Sigmoid colon (tissue), 7 donors: ENCODE measurements at regions of chr9 and their contacts with region 1.

Region 1: DNA sequence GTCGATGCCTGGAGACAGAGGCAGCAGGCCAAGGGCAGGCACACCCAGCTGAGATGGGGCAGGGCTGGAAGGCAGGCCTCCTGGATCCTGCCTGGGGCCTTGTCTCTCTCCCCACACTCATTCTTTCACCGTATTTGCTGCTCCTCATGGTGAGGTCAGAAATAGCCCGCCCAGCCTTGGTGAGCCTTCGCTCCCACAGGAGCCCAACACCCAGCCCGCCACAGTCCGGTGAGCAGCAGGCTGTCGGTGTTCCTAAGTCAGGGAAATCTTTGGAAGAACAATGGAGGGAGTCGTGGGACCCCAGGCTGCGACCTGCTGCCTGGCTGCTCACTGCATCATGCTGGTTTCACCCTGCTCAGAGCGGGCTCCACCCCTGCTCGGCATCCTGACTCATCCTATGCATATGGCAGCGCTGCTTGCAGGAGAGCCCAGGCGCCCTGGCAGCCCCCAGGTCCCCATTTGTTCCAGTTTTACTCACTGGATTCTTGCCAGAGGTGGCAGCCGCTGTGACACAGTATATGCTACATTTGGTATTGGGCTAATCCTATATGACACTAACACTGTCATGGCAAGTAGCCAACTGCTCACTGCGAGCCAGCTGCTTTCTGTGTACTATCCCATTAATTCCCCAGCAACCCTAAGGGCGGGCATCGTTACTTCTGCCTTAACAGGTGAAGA is 53.2 kb upstream of the NCS1 start:
- DNase-seq: no peak
- H3K4me3 ChIP-seq: no peak overlapping the region
- H3K27ac ChIP-seq: peak overlapping the region; percentile 21 to 90 (median 89)
- H3K4me1 ChIP-seq: peaks cover 0 to 64% (median 45%) of the 10 kb centered on the region in 4 donors
- H3K27me3 ChIP-seq: no peaks in the 10 kb centered on the region
- CTCF ChIP-seq: no peak
- EP300 ChIP-seq: no peak
- POLR2A ChIP-seq: no peak

Region 2: GRCh38 chr9:130138171-130138653 is 19.2 kb after region 1 on chr9:
- intact Hi-C with region 1: loop called (anchors 2 kb)
- DNase-seq: peak; percentile 87
- H3K4me3 ChIP-seq: no peak overlapping the region
- H3K27ac ChIP-seq: peak overlapping the region; percentile 74 to 93 (median 89)
- H3K4me1 ChIP-seq: peaks cover 0 to 61% (median 45%) of the 10 kb centered on the region in 4 donors
- H3K27me3 ChIP-seq: no peaks in the 10 kb centered on the region
- CTCF ChIP-seq: no peak
- EP300 ChIP-seq: peak in 1 of 4 donors; percentile 50
- POLR2A ChIP-seq: no peak

Region 3: DNA sequence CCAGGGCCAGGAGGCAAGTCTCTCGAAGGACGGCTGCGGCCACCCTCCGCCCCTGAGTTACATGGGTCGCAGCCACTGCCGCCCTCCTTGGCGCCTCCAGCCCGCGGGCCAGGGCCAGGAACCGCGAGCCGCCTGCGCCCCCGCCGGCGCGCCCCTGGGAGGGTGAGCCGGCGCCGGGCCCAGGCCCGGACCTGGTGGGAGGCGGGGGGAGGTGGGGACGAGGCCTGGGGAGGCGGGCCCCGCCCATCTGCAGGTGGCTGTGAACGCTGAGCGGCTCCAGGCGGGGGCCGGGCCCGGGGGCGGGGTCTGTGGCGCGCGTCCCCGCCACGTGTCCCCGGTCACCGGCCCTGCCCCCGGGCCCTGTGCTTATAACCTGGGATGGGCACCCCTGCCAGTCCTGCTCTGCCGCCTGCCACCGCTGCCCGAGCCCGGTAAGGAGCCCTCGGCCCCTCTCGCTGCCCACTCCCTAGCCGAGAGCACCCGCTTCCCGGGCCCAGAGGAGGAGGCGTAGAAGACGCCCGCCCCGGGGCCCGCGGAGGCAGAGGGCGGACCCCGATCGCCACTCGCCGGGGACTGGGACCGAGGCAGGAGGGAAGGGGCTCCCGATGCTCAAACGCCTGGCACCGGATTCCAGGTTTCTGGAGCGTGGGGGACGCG is 325.7 kb after region 1 on chr9 and contains the start of gene ASS1:
- intact Hi-C with region 1: loop called (anchors 10 kb)
- DNase-seq: peak; percentile 85
- H3K4me3 ChIP-seq: peak within 1 kb of the TSS; percentile 45 to 63 (median 56)
- H3K27ac ChIP-seq: peak within 1 kb of the TSS; percentile 80 to 94 (median 91)
- H3K4me1 ChIP-seq: peaks cover 0 to 51% (median 37%) of the 10 kb centered on the region in 4 donors
- H3K27me3 ChIP-seq: no peaks in the 10 kb centered on the region
- CTCF ChIP-seq: no peak
- EP300 ChIP-seq: no peak
- POLR2A ChIP-seq: peak in 1 of 2 donors; percentile 31
- total RNA-seq, gene ASS1: 65.8 to 84.2 (median 76.5) TPM